GM10248 (cell line): ENCODE measurements at regions of chr11 and their contacts with region 1.

Region 1: GRCh38 chr11:86456052-86456939 is 81.6 kb downstream of the CCDC81 start:
- DNase-seq: peak; percentile 71
- CTCF ChIP-seq: peak; percentile 91

Region 2: GRCh38 chr11:86442420-86442819 is 13.9 kb before region 1 on chr11:
- CTCF ChIA-PET with region 1: interaction called, 18 read pairs
- POLR2A ChIA-PET with region 1: no interaction called
- DNase-seq: no peak
- CTCF ChIP-seq: no peak

Region 3: DNA sequence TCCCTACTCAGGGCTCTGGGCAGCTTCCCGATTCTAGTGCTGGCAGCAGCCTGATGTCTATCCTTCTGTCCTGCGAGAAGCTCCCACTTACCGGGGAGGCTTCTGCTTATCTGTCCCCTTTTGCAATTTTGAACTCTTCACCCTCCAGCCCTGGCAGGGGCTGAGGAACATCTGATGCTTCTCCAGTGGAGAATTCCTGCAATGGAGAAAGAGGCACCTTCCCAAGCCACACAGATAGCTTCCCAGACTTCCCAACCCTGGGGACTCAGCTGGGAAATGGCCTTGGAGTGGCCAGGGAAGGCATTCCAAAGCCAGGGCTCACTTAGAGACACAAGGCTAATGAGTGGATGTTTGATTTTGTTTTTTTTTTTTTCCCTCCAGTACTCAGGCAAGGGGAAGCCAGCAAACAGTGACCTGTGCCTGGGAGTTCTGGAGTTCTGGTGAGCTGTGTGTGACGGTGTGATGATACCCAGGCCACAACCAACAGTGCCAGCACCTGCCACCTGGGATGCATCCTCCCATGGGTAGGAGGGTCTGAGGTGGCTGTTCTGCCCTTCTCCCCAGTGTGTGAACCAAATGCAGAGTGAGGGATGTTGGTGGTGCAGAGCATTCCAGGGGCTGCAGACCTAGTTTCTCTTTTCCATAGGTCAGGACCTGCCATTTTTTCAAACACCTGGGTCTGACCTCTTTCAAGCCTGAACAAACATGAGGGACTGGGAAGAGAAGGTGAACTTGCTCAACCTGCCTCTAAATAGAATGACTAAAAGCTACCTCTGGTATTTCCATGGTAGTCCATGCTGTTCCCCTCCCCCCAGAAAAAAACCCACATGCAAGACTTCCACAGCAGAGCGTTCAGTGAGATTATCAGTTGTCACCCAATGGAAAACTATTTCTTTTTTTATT is 13.4 kb after region 1 on chr11:
- CTCF ChIA-PET with region 1: interaction called, 16 read pairs
- POLR2A ChIA-PET with region 1: no interaction called
- DNase-seq: no peak
- CTCF ChIP-seq: no peak

Region 4: DNA sequence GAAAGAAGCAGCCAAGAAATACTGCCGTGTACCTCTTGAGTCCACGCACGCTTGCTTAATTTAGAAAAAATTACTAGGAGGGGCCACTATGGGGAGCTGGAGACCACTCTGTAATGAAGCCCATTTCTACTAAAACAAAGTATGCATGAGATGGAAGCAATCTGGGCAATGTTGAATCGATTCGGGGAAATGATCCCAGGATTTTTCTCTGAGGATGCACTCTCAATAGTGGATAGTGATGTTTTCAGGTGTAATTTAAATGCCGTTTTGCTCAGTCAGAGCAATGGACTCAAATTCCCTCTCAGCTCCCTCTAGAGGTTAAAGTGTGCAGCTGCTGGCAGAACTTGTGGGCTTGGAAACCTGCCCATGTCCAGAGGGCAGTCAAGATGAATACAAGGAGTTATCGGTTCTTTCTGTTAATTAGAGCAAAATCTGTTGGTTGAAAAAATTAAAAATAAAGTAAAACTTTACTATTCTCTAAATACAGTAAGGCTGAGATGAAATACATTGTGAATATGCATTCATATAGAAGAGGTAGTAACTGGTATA is 152.0 kb after region 1 on chr11:
- CTCF ChIA-PET with region 1: interaction called, 18 read pairs
- POLR2A ChIA-PET with region 1: no interaction called
- DNase-seq: peak; percentile 46
- CTCF ChIP-seq: peak; percentile 89